Endothelial cell of umbilical vein (primary cell): ENCODE measurements at regions of chr5 and their contacts with region 1.

Region 1: DNA sequence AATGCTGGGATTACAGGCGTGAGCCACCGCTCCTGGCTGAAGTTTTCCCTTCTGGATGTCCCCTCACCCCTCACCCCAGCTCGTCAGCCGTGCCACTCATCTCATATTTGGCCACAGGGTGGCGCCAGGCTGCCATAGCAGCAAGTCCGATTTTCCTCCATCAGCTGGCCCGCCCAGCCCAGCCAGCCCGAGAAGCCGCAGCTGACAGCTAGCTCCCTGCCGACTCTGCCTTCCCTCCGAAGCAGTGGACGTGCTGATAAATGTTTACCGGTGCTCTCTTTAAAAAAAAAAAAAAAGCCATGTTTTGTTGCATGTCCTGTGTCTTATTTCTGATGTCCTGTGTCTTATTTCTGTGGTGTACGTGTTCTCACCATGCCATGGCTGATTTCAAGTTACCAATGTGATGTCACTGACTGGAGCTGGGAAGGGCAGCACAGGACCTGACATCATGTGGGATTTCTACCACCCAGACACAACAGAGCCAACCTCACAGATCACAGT is 58.3 kb downstream of the PFDN1 start:
- DNase-seq: peak; percentile 88
- H3K4me3 ChIP-seq: no peak overlapping the region
- H3K27ac ChIP-seq: peak overlapping the region; percentile 57
- H3K4me1 ChIP-seq: peaks cover 41% of the 10 kb centered on the region
- H3K27me3 ChIP-seq: no peaks in the 10 kb centered on the region
- CTCF ChIP-seq: peak; percentile 72 to 86
- POLR2A ChIP-seq: no peak

Region 2: GRCh38 chr5:140145818-140146522 is 98.6 kb before region 1 on chr5:
- CTCF ChIA-PET with region 1: interaction called, 12 read pairs
- POLR2A ChIA-PET with region 1: no interaction called
- dilution Hi-C with region 1: no loop called
- intact Hi-C with region 1: no loop called
- DNase-seq: peak; percentile 61
- H3K4me3 ChIP-seq: peak overlapping the region in 1 of 3 experiments; percentile 8
- H3K27ac ChIP-seq: no peak overlapping the region
- H3K4me1 ChIP-seq: no peaks in the 10 kb centered on the region
- H3K27me3 ChIP-seq: peaks cover 0 to 6% of the 10 kb centered on the region in 2 experiments
- CTCF ChIP-seq: peak; percentile 67 to 77
- POLR2A ChIP-seq: no peak

Region 3: DNA sequence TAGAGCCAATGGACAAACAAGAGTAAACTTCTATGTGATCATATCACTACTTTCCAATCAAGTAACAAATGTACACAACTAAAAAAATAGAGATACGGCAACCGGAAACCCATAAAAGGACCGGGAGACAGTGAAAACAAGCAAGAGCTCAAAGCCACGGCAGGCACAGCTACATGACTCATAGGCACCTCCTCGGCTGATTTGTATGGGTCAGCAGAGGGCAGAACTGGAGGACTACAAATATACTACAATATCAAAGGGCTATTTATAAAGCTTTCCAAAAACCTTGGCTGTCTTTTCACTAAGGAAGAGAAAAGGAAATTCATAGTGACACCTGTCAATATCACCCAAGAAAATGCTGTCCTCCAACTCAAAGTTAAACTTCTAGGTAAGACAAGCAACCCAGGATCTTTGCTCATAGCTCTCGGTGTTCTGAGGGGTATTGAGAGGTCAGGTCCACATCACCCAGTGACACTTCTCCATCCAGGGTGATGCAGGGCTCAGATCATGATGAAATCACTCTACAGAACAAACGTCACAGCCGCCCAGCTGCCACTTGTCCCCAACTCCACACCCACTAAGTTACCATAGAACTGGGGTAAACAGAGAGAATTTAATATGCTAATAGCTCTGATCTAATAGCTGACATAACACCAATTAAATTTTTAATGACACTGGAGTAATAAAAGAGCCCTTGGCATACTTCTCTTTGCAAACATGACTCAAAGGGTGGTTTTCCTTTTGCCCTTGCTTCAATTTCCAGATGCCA is 17.0 kb after region 1 on chr5:
- CTCF ChIA-PET with region 1: interaction called, 64 read pairs
- POLR2A ChIA-PET with region 1: interaction called, 7 read pairs
- dilution Hi-C with region 1: no loop called
- intact Hi-C with region 1: loop called (anchors 1 kb)
- DNase-seq: peak; percentile 97
- H3K4me3 ChIP-seq: peak overlapping the region in 1 of 3 experiments; percentile 23
- H3K27ac ChIP-seq: peak overlapping the region; percentile 84
- H3K4me1 ChIP-seq: peaks cover 30% of the 10 kb centered on the region
- H3K27me3 ChIP-seq: no peaks in the 10 kb centered on the region
- CTCF ChIP-seq: no peak
- POLR2A ChIP-seq: peak; percentile 53

Region 4: DNA sequence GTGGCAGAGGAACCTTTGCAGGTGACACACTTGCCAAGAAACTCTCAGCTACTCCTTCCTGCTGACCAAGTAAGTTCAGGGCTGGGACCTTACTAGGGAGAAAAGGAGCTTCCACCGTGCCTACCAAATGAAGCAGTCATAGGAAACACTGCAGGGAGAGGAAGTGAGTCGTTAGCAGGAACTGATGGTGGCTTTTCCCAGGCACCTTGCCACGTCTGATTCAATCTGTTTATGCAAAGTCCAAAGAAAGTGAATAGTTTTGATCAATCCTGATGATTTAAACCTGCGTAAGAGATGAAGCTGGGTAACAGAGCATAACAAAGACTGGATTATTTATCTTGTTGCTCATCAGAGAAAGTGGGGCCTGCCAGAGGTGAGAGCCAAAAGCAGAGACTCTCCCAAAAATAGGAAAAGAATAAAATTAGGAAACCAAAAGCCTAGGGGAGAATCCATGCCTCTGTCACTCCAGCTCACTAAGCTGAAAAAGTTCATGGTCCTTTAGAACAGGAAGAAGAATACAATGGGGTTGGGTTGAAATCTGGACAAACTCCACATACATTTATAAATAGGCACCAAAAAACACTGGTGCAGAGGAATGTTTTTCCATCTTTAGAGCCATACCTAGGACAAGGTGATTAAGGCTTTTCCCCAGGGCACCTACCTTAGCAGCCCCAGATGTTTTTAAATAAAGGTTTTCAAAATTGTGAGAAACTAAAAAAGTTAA is 67.7 kb after region 1 on chr5:
- CTCF ChIA-PET with region 1: interaction called, 36 read pairs
- POLR2A ChIA-PET with region 1: interaction called, 5 read pairs
- dilution Hi-C with region 1: no loop called
- intact Hi-C with region 1: loop called (anchors 1 kb)
- DNase-seq: peak; percentile 99
- H3K4me3 ChIP-seq: peak overlapping the region in 2 of 3 experiments; percentile 10 to 18
- H3K27ac ChIP-seq: peak overlapping the region; percentile 98
- H3K4me1 ChIP-seq: peaks cover 40% of the 10 kb centered on the region
- H3K27me3 ChIP-seq: no peaks in the 10 kb centered on the region
- CTCF ChIP-seq: no peak
- POLR2A ChIP-seq: peak; percentile 65

Region 5: GRCh38 chr5:140346348-140347101 is 102.0 kb after region 1 on chr5 and contains the start of gene HBEGF:
- CTCF ChIA-PET with region 1: interaction called, 1,214 read pairs
- POLR2A ChIA-PET with region 1: interaction called, 112 read pairs
- dilution Hi-C with region 1: no loop called
- intact Hi-C with region 1: loop called (anchors 1 kb)
- DNase-seq: peak; percentile 84
- H3K4me3 ChIP-seq: peak within 1 kb of the TSS; percentile 72 to 86 (median 81)
- H3K27ac ChIP-seq: peak within 1 kb of the TSS; percentile 81
- H3K4me1 ChIP-seq: peaks cover 55% of the 10 kb centered on the region
- H3K27me3 ChIP-seq: no peaks in the 10 kb centered on the region
- CTCF ChIP-seq: peak; percentile 21 to 41
- POLR2A ChIP-seq: peak; percentile 98
- total RNA-seq, gene HBEGF: 33.2 and 35.3 TPM in 2 replicates

Region 6: DNA sequence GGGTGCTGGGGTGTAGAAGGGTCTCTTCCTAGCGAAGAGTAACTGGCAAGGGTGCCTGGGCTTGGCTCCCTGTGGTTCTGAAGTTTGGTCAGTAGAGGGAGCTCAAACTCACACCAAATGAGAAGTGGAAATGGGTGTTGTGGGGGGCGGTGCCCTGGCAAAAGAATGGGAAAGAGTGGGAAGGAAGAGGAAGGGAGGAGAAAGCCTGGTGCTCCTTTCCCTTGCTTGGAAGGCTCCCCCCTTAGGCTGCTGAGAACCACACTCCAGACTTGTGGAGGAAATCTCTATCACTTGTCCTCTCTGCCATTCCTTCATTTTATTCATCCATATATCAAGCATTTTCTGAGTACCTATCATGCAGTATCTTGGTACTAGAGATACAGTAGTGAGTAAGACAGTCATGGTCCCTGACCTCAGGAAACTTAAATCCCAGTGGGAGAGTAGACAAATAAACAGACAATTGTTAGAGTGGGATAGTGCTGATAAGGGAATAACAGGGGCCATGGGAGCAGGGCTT is 128.5 kb after region 1 on chr5:
- CTCF ChIA-PET with region 1: interaction called, 12 read pairs
- POLR2A ChIA-PET with region 1: no interaction called
- dilution Hi-C with region 1: no loop called
- intact Hi-C with region 1: no loop called
- DNase-seq: peak; percentile 88
- H3K4me3 ChIP-seq: no peak overlapping the region
- H3K27ac ChIP-seq: no peak overlapping the region
- H3K4me1 ChIP-seq: peaks cover 13% of the 10 kb centered on the region
- H3K27me3 ChIP-seq: no peaks in the 10 kb centered on the region
- CTCF ChIP-seq: peak; percentile 80 to 88
- POLR2A ChIP-seq: no peak